Sciatic nerve (tissue), 2 donors: ENCODE measurements at regions of chr17 and their contacts with region 1.

Region 1: GRCh38 chr17:48678141-48678971 is 44.0 kb downstream of the PRAC1 start:
- DNase-seq: peak; percentile 70
- ATAC-seq: peak; percentile 72

Region 2: DNA sequence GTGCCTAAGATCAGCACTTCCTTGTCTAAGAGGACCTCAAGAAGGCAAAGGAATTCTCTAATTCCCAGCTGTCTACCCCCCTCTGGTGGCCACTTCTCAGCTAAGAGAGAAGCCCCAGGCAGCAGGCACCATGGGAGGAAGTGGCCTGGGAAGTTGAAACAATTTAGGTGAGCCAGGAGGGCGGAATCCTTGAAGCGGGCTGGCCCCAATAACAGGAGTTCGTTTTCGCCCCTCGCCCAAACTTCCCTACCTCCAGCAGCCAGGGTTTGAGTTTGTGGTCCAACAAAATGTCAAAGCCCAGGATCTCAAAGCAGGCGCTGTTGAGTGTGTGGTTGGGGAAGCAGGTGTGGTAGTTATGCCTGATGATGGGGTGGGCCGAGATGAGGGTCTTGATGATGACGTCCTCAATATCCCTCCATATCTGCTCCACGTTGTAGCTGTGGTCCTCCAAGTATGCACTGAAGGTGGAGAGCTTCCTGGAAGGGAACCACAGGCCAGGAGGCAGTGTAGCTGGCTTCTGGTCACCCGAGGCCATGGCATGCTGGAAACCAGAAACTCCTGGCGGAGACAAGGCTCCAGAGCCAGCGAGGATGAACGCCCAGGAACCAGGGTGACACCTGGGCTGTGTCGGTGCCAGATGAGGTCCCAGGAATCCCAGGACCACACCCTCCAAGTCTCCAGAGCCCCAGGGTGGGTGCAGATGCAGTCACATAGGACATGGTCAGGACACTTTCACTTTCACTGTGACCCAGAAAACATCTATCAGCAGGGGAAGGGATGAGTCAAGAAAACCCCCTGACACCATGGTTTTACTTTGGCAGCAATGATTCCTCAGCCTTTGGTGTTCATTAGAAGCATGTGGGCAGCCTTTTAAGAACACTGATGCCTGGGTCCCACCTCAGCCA is 113.0 kb after region 1 on chr17:
- intact Hi-C with region 1: loop called (anchors 10 kb)
- DNase-seq: peak; percentile 86
- ATAC-seq: peak; percentile 78